ENCODE measurements at regions of chr13 and their contacts with region 1.

Region 1: DNA sequence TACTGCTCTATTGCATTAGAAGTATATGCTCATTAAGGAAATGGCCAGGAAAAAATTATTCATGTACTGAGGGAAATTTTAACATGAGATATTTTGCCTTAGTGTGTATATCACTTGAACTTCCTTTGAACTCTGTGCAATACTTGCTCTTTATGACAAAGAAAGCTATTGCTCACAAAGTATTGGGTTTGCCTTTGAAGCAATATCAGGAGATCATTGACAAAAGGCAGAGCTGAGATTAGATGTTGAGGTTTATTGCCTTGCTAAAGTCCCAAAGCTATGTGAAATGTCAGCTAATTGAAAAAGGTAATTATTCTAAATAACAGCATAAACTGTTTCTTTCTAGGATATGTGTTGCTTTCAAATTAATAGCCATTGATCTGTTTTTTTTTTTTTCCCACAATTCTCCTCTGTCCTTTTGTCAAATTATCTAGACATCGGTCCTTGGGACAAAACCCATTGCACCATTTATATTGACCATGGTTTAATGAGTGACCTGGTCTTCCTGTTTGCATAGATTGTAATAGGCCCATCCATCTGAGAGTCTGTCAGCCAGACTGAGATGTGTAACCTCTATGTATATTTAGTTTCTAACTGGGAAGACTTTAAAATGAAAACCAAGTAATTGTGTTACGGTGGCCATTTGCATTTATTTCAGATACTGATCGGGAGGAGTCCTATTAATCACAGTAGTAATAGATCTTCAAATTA is 752.7 kb upstream of the GPC6 start:
- DNase-seq: no peak
- H3K4me3 ChIP-seq: no peak overlapping the region
- H3K27ac ChIP-seq: no peak overlapping the region
- H3K4me1 ChIP-seq: no peaks in the 10 kb centered on the region
- CTCF ChIP-seq: no peak

Region 2: GRCh38 chr13:92463134-92463533 is 10.8 kb before region 1 on chr13:
- CTCF ChIA-PET with region 1: no interaction called
- POLR2A ChIA-PET with region 1: interaction called, 10 read pairs
- intact Hi-C with region 1: no loop called
- DNase-seq: no peak
- H3K4me3 ChIP-seq: no peak overlapping the region
- H3K27ac ChIP-seq: no peak overlapping the region
- H3K4me1 ChIP-seq: no peaks in the 10 kb centered on the region
- CTCF ChIP-seq: no peak